Motor neuron (in vitro differentiated cells): ENCODE measurements at regions of chr6 and their contacts with region 1.

Region 1: GRCh38 chr6:50785921-50786320 is 32.8 kb upstream of the TFAP2B start:
- ATAC-seq: no peak
- H3K4me3 ChIP-seq: no peak overlapping the region
- H3K27ac ChIP-seq: no peak overlapping the region
- H3K4me1 ChIP-seq: no peaks in the 10 kb centered on the region

Region 2: GRCh38 chr6:50135968-50136367 is 650.0 kb before region 1 on chr6:
- in situ Hi-C with region 1: loop called in 5 of 9 experiments (anchors 10 to 25 kb)
- ATAC-seq: no peak
- H3K4me3 ChIP-seq: no peak overlapping the region
- H3K27ac ChIP-seq: no peak overlapping the region
- H3K4me1 ChIP-seq: no peaks in the 10 kb centered on the region

Region 3: GRCh38 chr6:50962213-50962759 is 176.4 kb after region 1 on chr6:
- in situ Hi-C with region 1: no loop called
- ATAC-seq: no peak
- H3K4me3 ChIP-seq: no peak overlapping the region
- H3K27ac ChIP-seq: no peak overlapping the region
- H3K4me1 ChIP-seq: no peaks in the 10 kb centered on the region